ENCODE measurements at regions of chr12 and their contacts with region 1.

Region 1: DNA sequence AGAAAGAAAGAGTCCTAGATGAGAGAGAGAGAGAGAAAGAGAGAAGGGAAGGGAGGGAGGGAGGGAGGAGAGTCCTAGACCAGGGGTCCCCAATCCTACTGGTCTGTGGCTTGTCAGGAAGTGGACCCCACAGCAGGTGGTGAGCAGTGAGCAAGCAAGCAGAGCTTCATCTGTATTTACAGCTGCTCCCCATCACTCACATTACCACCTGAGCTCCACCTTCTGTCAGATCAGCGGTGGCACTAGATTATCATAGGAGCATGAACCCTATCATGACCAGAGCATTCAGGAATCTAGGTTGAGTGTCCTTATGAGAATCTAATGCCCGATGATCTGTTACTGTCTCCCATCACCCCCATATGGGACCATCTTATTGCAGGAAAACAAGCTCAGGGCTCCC is 39.2 kb upstream of the AMN1 start:
- DNase-seq: no peak
- H3K4me3 Mint-ChIP-seq: no peak overlapping the region
- H3K27ac Mint-ChIP-seq: no peak overlapping the region
- H3K4me1 Mint-ChIP-seq: peaks cover 18% of the 10 kb centered on the region
- H3K27me3 Mint-ChIP-seq: no peaks in the 10 kb centered on the region

Region 2: DNA sequence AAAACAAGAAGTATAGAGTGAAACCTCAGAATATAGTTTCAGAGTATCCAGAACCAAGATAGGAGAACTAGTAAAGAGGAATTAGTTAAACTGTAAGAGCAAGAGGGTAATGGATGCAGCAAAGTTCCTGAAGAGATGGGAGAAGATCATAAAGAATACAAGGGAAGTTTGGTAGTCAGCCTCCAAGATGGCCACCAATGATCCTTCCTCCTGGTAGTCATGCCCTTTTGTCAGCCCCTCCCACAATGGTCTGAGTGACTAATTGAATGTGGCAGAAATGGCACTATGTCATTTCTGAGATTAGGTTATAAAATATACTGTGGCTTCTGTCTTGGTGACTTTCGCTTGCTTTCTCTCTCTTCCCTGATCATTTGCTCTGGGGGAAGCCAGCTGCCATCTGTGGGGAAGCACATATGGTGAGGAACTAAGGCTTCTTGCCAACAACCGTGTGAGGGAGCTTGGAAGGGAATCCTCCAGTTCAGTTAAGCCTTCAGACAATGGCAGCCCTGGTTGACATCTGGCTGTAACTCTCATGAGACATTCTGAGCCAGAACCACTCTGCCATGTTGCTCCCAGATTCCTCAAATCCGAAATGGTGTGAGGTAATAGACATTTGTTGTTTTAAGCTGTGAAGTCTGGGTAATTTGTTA is 16.1 kb after region 1 on chr12:
- CTCF ChIA-PET with region 1: no interaction called
- POLR2A ChIA-PET with region 1: no interaction called
- intact Hi-C with region 1: no loop called
- DNase-seq: no peak
- H3K4me3 Mint-ChIP-seq: no peak overlapping the region
- H3K27ac Mint-ChIP-seq: no peak overlapping the region
- H3K4me1 Mint-ChIP-seq: no peaks in the 10 kb centered on the region
- H3K27me3 Mint-ChIP-seq: no peaks in the 10 kb centered on the region

Region 3: DNA sequence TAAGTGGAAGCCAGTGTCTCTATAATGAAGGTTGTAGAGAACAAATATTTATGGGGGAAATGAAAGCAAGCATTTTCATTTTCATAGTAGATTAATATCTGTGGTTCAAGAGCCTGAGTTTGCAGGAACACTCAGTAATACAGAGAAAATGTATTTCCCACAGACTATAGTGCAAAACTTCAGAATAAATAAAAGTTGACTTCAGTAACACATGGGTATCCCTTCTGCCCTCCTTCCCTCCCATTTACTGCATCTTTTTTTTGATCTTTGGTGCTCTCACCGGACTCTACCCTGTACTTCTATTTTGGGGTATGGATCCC is 36.1 kb after region 1 on chr12:
- CTCF ChIA-PET with region 1: no interaction called
- POLR2A ChIA-PET with region 1: no interaction called
- intact Hi-C with region 1: loop called (anchors 5 kb)
- DNase-seq: no peak
- H3K4me3 Mint-ChIP-seq: peak overlapping the region; percentile 66
- H3K27ac Mint-ChIP-seq: peak overlapping the region; percentile 79
- H3K4me1 Mint-ChIP-seq: peaks cover 47% of the 10 kb centered on the region
- H3K27me3 Mint-ChIP-seq: no peaks in the 10 kb centered on the region

Measured in activated CD4-positive, alpha-beta memory T cell treated with anti-CD3 and anti-CD28 coated beads for 36 hours (primary cell).